ENCODE measurements at regions of chr3 and their contacts with region 1.

Region 1: GRCh38 chr3:18988614-18989229 is 159.6 kb upstream of the KCNH8 start:
- DNase-seq: peak; percentile 12
- H3K4me3 Mint-ChIP-seq: no peak overlapping the region
- H3K27ac Mint-ChIP-seq: no peak overlapping the region
- H3K4me1 Mint-ChIP-seq: peaks cover 12% of the 10 kb centered on the region
- H3K27me3 Mint-ChIP-seq: no peaks in the 10 kb centered on the region
- CTCF ChIP-seq: peak; percentile 41

Region 2: GRCh38 chr3:17894434-17895060 is 1094.2 kb before region 1 on chr3:
- CTCF ChIA-PET with region 1: no interaction called
- intact Hi-C with region 1: loop called (anchors 10 kb)
- DNase-seq: peak; percentile 70
- H3K4me3 Mint-ChIP-seq: no peak overlapping the region
- H3K27ac Mint-ChIP-seq: no peak overlapping the region
- H3K4me1 Mint-ChIP-seq: peaks cover 12% of the 10 kb centered on the region
- H3K27me3 Mint-ChIP-seq: no peaks in the 10 kb centered on the region
- CTCF ChIP-seq: peak; percentile 56

Region 3: GRCh38 chr3:18389108-18389733 is 599.5 kb before region 1 on chr3:
- CTCF ChIA-PET with region 1: no interaction called
- intact Hi-C with region 1: loop called (anchors 10 kb)
- DNase-seq: peak; percentile 38
- H3K4me3 Mint-ChIP-seq: no peak overlapping the region
- H3K27ac Mint-ChIP-seq: no peak overlapping the region
- H3K4me1 Mint-ChIP-seq: no peaks in the 10 kb centered on the region
- H3K27me3 Mint-ChIP-seq: no peaks in the 10 kb centered on the region
- CTCF ChIP-seq: peak; percentile 31

Region 4: GRCh38 chr3:18444595-18445400 is 543.9 kb before region 1 on chr3:
- CTCF ChIA-PET with region 1: no interaction called
- intact Hi-C with region 1: loop called (anchors 10 kb)
- DNase-seq: peak; percentile 83
- H3K4me3 Mint-ChIP-seq: peak overlapping the region; percentile 91
- H3K27ac Mint-ChIP-seq: peak overlapping the region; percentile 81
- H3K4me1 Mint-ChIP-seq: no peaks in the 10 kb centered on the region
- H3K27me3 Mint-ChIP-seq: peaks cover 21% of the 10 kb centered on the region
- CTCF ChIP-seq: no peak

Region 5: DNA sequence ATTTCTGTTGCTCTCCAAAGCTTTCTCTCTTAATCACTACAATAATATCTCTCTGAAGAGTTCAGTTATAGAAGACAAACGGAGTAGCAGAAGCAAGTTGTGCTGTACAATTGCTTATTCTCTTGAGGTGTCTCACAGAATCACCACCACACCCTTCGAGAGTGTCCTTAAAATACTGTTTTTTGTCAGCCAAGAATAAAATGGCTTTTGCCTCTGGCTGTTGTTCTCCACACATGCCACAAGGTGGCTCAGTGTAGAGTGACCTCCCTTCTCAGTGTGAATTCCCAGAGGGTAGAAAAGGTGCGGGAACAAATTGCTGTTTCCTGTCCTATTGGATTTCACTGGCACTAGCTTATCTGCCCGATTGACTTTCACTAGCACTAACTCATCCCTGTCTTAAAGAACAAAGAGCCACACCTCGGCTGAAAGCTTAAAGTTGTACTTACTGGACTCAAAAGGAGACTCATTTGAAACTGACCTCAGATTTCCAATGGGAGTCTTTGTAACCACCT is 429.3 kb before region 1 on chr3:
- CTCF ChIA-PET with region 1: interaction called, 7 read pairs
- intact Hi-C with region 1: loop called (anchors 1 kb)
- DNase-seq: peak; percentile 46
- H3K4me3 Mint-ChIP-seq: peak overlapping the region; percentile 10
- H3K27ac Mint-ChIP-seq: peak overlapping the region; percentile 68
- H3K4me1 Mint-ChIP-seq: peaks cover 11% of the 10 kb centered on the region
- H3K27me3 Mint-ChIP-seq: no peaks in the 10 kb centered on the region
- CTCF ChIP-seq: peak; percentile 67

Region 6: GRCh38 chr3:18847583-18848197 is 141.0 kb before region 1 on chr3:
- CTCF ChIA-PET with region 1: interaction called, 14 read pairs
- intact Hi-C with region 1: loop called (anchors 1 kb)
- DNase-seq: no peak
- H3K4me3 Mint-ChIP-seq: no peak overlapping the region
- H3K27ac Mint-ChIP-seq: no peak overlapping the region
- H3K4me1 Mint-ChIP-seq: no peaks in the 10 kb centered on the region
- H3K27me3 Mint-ChIP-seq: no peaks in the 10 kb centered on the region
- CTCF ChIP-seq: no peak